ENCODE measurements at regions of chr20 and their contacts with region 1.

Region 1: DNA sequence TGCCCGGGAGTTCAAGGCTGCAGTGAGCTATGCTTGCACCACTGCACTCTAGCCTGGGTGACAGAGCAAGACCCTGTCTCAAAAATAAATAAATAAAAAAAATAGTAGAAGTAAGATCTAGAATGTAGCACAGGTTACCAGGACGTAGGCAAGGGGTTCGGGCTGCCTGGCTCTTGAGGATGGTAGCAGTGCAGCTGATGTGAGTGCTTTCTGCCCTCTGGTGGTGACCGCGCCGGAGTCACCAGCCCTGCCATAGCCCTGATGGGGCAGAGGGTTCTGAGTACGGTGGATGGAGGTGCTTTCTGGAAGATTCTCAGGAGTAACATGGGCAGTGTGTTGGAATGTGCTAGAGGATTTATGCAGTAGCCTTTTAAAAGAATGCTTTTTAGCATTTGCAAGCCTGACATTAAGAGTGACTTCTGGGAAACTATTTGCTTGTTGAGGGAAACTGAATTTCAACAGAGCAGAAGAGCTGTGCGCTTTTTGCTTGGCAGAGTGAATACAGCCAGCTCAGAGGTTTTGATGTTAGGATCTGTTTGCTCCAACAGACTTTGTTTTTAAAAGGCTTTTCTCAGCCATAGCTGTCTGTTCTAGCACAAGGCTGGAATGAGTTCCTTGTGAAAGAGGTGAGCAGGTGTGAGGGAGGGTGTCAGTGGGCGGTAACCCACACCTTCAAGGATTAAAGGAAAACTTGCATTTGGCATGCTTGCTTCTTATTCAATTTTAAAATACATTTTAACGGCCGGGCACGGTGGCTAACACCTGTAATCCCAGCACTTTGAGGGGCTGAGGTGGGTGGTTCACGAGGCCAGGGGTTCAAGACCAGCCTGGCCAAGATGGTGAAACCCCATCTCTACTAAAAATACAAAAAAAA is 65.9 kb downstream of the PTPN1 start:
- DNase-seq: no peak
- H3K4me3 ChIP-seq: no peak overlapping the region
- CTCF ChIP-seq: peak; percentile 89

Region 2: GRCh38 chr20:49668181-49668877 is 907.8 kb before region 1 on chr20:
- CTCF ChIA-PET with region 1: no interaction called
- POLR2A ChIA-PET with region 1: no interaction called
- DNase-seq: no peak
- H3K4me3 ChIP-seq: no peak overlapping the region
- CTCF ChIP-seq: no peak

Region 3: GRCh38 chr20:50460460-50461267 is 115.4 kb before region 1 on chr20:
- CTCF ChIA-PET with region 1: interaction called, 72 read pairs
- POLR2A ChIA-PET with region 1: no interaction called
- DNase-seq: no peak
- H3K4me3 ChIP-seq: no peak overlapping the region
- CTCF ChIP-seq: peak; percentile 90

Region 4: DNA sequence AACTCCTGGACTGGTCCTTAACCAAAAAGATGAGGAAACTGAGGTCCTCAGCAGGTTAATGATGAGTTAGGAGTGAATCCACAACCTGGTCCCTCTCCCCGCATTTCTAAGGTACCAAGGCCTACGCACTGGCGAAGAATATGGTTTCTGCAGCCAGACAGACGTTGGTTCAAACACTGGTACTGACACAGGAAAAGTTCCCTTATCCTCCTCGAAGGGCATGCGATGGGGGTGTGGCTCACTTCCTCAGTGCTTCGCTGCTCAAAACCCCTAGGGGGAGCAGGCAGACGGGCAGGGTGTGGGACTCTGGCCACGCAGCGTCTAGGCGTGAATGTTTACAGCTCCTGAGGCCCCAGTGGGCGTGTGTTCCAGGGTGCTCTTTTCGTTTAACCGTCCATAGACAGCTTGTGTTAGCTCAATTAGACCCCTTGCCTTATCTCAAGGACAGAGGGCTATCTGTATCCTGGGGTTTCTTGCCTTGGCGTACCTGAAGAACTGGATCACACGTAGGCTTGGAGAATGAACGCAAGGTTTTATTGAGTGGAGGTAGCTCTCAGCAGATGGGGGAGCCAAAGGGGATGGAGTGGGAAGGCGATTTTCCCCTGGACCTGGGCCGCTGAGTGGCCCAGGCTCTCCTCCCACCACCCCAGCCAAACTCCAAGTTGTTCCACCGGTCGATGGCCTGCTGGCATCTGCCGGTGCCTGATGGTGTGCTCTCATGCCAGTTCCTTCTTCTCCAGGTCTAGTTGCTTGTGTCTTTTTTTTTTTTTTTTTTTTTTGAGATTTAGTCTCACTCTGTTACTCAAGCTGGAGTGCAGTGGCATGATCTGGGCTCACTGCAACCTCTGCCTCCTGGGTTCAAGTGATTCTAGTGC is 97.7 kb before region 1 on chr20:
- CTCF ChIA-PET with region 1: interaction called, 62 read pairs
- POLR2A ChIA-PET with region 1: no interaction called
- DNase-seq: no peak
- H3K4me3 ChIP-seq: no peak overlapping the region
- CTCF ChIP-seq: peak; percentile 84

Region 5: DNA sequence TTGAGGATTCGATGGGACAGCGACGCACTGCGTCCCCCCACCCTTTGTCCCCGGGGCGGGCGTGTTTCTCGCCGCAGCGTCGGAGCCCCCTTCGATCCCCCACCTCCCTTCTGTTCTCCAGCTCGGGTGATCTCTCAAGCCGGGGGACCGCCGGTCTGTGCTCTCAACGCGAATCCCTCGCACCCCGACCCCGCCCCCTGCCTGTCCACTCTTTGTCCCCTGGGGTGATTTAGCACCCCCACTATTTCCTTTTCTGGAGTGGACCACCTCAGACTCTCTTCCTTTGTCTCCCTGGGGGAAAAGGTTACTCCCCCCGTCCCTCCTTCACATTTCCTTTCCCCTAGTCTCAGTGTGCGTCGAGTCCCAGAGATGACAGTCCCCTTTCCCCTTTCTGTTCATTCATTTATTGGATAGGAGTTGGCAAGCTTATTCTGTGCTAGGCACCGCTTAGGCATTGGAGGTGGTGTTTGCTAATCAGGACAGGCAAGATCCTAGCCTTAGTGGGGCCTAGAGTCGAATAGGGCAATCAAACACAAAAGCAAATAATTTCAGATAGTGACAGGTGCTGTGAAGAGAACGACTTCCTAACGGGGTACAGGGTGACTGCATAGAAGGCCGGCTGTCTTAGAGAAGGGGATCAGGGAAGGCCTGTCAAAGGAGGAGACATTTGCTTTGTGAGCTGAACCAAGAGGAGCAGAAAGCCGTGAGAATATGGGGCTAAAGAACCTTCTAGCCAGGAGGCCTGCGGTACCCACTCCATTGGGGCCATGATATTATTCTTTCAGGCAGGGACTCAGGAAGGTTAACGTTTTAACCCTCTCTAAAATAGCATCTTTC is 65.2 kb before region 1 on chr20:
- CTCF ChIA-PET with region 1: interaction called, 24 read pairs
- POLR2A ChIA-PET with region 1: interaction called, 5 read pairs
- DNase-seq: no peak
- H3K4me3 ChIP-seq: peak overlapping the region; percentile 98
- CTCF ChIP-seq: no peak

Region 6: GRCh38 chr20:50561379-50562078 is 14.6 kb before region 1 on chr20:
- CTCF ChIA-PET with region 1: interaction called, 88 read pairs
- POLR2A ChIA-PET with region 1: no interaction called
- DNase-seq: peak; percentile 87
- H3K4me3 ChIP-seq: no peak overlapping the region; the same call in 1 of the 2 replicates
- CTCF ChIP-seq: no peak

Region 7: GRCh38 chr20:50595988-50596689 is 20.1 kb after region 1 on chr20:
- CTCF ChIA-PET with region 1: interaction called, 11 read pairs
- POLR2A ChIA-PET with region 1: no interaction called
- DNase-seq: no peak
- H3K4me3 ChIP-seq: no peak overlapping the region
- CTCF ChIP-seq: no peak

Region 8: GRCh38 chr20:51237278-51237677 is 661.2 kb after region 1 on chr20:
- CTCF ChIA-PET with region 1: no interaction called
- POLR2A ChIA-PET with region 1: no interaction called
- DNase-seq: no peak
- H3K4me3 ChIP-seq: no peak overlapping the region
- CTCF ChIP-seq: no peak